ENCODE measurements at regions of chr16 and their contacts with region 1.

Region 1: GRCh38 chr16:10871149-10871991 is 5.6 kb upstream of the CIITA start:
- DNase-seq: peak; percentile 56
- ATAC-seq: peak; percentile 51
- H3K4me3 Mint-ChIP-seq: peak overlapping the region; percentile 70
- H3K27ac Mint-ChIP-seq: peak overlapping the region; percentile 91
- H3K4me1 Mint-ChIP-seq: peaks cover 99% of the 10 kb centered on the region
- H3K27me3 Mint-ChIP-seq: no peaks in the 10 kb centered on the region
- CTCF ChIP-seq: no peak

Region 2: DNA sequence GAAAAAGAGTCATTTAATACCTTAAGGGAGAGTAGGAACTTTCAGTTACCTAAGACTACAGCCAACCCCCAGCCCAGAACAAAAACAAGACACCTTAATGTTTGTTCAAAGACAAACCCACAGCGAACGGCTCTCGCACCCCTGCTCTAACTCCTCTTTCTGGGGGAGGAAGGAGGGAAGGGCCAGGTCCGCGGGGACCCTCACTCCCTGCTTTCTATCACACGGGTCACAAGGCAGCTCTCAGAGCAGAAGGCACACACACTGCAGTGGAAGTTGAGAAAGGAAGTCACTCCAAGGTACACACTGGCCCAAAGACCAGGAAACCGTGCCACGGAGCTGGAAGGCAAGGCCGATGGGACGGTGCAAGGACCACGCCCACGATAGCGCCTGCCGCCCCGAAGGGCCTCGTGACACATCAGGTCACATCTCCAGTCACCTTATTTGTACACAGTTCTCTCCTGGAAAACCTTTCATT is 1979.2 kb before region 1 on chr16:
- CTCF ChIA-PET with region 1: no interaction called
- POLR2A ChIA-PET with region 1: no interaction called
- intact Hi-C with region 1: loop called (anchors 5 kb)
- DNase-seq: peak; percentile 34
- ATAC-seq: peak; percentile 5
- H3K4me3 Mint-ChIP-seq: peak overlapping the region; percentile 68
- H3K27ac Mint-ChIP-seq: peak overlapping the region; percentile 91
- H3K4me1 Mint-ChIP-seq: peaks cover 39% of the 10 kb centered on the region
- H3K27me3 Mint-ChIP-seq: no peaks in the 10 kb centered on the region
- CTCF ChIP-seq: no peak

Region 3: DNA sequence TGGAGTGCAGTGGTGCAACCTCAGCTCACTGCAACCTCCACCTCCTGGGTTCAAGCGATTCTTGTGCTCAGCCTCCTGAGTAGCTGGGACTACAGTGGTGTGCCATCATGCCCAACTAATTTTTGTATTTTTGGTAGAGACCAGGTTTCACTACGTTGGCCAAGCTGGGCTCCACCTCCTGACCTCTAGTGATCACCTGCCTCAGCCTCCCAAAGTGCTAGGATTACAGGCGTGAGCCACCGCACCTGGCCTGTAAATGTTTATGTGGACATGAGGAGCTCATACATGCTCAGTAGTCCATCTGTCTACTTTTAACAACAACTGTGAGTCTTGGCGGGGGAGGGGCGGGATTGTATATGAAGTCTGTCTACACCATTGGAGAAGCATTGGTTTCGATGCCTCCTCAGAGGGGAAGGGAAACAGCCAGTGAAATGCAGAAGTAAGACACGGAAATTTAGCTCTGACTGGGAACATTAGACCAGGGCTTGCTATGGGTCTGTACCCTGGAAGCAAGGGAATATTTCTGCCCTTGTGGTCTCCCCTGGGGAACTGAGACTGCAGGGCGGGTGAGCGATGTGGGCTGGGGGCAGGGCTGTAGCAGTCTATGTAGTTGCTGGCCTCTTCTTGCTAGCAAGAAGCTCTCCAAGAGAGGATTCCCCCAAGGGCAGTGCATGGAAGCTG is 118.4 kb before region 1 on chr16:
- CTCF ChIA-PET with region 1: interaction called, 3 read pairs
- POLR2A ChIA-PET with region 1: interaction called, 58 read pairs
- intact Hi-C with region 1: no loop called
- DNase-seq: peak; percentile 53
- ATAC-seq: peak; percentile 86
- H3K4me3 Mint-ChIP-seq: peak overlapping the region; percentile 63
- H3K27ac Mint-ChIP-seq: peak overlapping the region; percentile 77
- H3K4me1 Mint-ChIP-seq: peaks cover 61% of the 10 kb centered on the region
- H3K27me3 Mint-ChIP-seq: no peaks in the 10 kb centered on the region
- CTCF ChIP-seq: no peak

Region 4: DNA sequence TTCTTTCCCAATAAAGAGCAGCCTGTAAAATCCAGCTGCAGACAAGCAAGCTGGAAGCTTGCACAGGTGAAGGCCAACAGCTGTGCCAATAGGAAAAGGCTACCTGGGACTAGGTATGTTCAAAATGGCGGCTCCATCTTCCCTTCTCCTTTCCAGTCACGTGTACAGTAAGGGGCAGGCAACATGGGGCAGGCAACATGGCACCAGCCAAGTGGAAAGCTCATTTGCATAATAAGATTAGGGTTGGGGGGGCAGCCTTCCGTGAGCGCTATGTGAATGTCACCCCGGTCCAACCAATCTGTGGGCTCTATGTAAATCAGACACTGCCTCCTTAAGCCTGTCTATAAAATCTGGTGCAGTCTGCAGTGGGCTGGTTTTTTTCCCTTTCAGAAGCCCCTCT is 84.1 kb before region 1 on chr16:
- CTCF ChIA-PET with region 1: no interaction called
- POLR2A ChIA-PET with region 1: interaction called, 10 read pairs
- intact Hi-C with region 1: no loop called
- DNase-seq: peak; percentile 29
- ATAC-seq: peak; percentile 92
- H3K4me3 Mint-ChIP-seq: no peak overlapping the region
- H3K27ac Mint-ChIP-seq: peak overlapping the region; percentile 44
- H3K4me1 Mint-ChIP-seq: peaks cover 52% of the 10 kb centered on the region
- H3K27me3 Mint-ChIP-seq: no peaks in the 10 kb centered on the region
- CTCF ChIP-seq: no peak

Region 5: GRCh38 chr16:10835281-10835931 is 36.0 kb before region 1 on chr16:
- CTCF ChIA-PET with region 1: no interaction called
- POLR2A ChIA-PET with region 1: interaction called, 15 read pairs
- intact Hi-C with region 1: loop called (anchors 1 kb)
- DNase-seq: no peak
- ATAC-seq: peak; percentile 43
- H3K4me3 Mint-ChIP-seq: no peak overlapping the region
- H3K27ac Mint-ChIP-seq: peak overlapping the region; percentile 31
- H3K4me1 Mint-ChIP-seq: peaks cover 62% of the 10 kb centered on the region
- H3K27me3 Mint-ChIP-seq: no peaks in the 10 kb centered on the region
- CTCF ChIP-seq: no peak

Region 6: DNA sequence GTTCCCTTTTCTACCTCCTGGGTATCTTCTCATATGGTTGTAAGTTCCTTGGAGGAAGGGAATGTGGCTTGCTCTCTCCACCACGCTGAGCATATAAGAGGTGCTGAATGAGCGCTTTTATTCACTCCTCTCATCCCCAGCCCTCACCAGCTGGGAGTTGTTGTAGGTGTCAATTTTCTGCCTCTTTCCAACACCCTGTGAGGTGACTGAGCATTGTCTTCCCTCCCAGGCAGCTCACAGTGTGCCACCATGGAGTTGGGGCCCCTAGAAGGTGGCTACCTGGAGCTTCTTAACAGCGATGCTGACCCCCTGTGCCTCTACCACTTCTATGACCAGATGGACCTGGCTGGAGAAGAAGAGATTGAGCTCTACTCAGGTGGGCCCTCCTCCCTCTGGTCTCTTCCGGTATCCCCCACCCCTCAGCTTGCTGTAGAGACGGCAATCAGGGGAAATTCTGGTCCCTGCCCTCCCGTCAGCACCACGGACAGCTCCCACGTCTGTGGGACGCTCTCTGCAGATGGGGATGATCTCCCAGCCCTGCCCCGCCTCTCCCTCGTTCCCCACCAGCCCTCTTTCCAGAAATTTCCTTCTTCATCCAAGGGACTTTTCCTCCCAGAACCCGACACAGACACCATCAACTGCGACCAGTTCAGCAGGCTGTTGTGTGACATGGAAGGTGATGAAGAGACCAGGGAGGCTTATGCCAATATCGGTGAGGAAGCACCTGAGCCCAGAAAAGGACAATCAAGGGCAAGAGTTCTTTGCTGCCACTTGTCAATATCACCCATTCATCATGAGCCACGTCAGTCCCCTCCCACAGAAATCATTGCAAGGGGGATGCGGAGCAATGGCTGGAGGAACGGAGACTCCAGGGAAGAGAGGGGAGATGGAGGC is 23.9 kb after region 1 on chr16:
- CTCF ChIA-PET with region 1: interaction called, 76 read pairs
- POLR2A ChIA-PET with region 1: interaction called, 318 read pairs
- intact Hi-C with region 1: loop called (anchors 1 kb)
- DNase-seq: peak; percentile 60
- ATAC-seq: no peak
- H3K4me3 Mint-ChIP-seq: peak overlapping the region; percentile 67
- H3K27ac Mint-ChIP-seq: peak overlapping the region; percentile 91
- H3K4me1 Mint-ChIP-seq: peaks cover 99% of the 10 kb centered on the region
- H3K27me3 Mint-ChIP-seq: no peaks in the 10 kb centered on the region
- CTCF ChIP-seq: no peak

Region 7: GRCh38 chr16:10929853-10930754 is 58.7 kb after region 1 on chr16:
- CTCF ChIA-PET with region 1: no interaction called
- POLR2A ChIA-PET with region 1: no interaction called
- intact Hi-C with region 1: no loop called
- DNase-seq: no peak
- ATAC-seq: peak; percentile 14
- H3K4me3 Mint-ChIP-seq: peak overlapping the region; percentile 5
- H3K27ac Mint-ChIP-seq: peak overlapping the region; percentile 71
- H3K4me1 Mint-ChIP-seq: peaks cover 54% of the 10 kb centered on the region
- H3K27me3 Mint-ChIP-seq: no peaks in the 10 kb centered on the region
- CTCF ChIP-seq: no peak